H1 (cell line): ENCODE measurements at regions of chr18 and their contacts with region 1.

Region 1: DNA sequence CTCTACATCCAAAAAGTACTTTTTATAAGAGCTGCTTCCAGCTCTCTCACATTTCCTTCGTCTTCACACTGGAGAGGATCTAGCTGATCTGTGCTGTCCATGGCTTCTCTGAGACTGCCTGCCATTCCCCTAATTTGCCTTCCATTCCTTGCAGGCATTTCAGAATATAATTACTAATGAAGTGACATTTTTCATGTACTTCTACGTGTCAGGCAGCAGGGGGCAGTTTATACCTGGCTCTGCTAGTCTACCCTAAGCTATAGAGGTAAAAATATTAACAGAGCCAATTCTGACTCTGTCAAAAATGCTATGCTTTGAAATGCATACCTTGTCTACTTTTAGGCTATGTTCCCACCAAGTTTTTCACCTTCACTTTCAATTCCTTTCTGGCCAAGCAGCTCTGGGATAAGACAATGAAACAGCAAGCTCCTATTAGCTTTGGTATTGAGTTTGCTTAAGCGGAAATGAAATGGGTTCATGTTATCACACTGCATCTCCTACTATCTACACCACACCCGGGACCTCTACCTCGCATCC is 81.9 kb downstream of the MEP1B start:
- DNase-seq: no peak
- H3K4me3 ChIP-seq: no peak overlapping the region
- H3K27ac ChIP-seq: no peak overlapping the region
- H3K4me1 ChIP-seq: peaks cover 0 to 3% (median under 1%) of the 10 kb centered on the region in 4 experiments; a peak in 3 of 7 replicates
- H3K27me3 ChIP-seq: no peaks in the 10 kb centered on the region
- CTCF ChIP-seq: peak in 2 of 3 experiments; percentile 51 to 68; a peak in 2 of 4 replicates
- EP300 ChIP-seq: no peak
- POLR2A ChIP-seq: no peak
- RAD21 ChIP-seq: peak; percentile 80 to 82

Region 2: DNA sequence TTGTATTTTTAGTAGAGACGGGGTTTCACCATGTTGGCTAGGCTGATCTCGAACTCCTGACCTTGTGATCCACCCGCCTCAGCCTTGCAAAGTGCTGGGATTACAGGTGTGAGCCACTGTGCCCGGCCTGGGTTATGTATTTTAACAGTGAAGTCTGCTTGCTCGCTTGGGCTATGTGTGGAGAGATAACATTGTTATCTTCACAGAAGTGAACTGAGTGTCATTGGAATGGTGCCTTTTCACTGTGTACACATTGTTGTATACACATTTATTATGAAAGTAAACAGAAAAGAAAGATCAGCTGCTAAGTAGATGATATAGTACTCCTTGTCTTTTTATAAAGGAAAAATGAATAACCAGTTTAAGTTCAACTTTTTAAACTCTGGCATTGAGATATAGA is 149.7 kb before region 1 on chr18:
- CTCF ChIA-PET with region 1: no interaction called
- POLR2A ChIA-PET with region 1: no interaction called
- DNase-seq: no peak
- H3K4me3 ChIP-seq: no peak overlapping the region
- H3K27ac ChIP-seq: no peak overlapping the region
- H3K4me1 ChIP-seq: no peaks in the 10 kb centered on the region
- H3K27me3 ChIP-seq: no peaks in the 10 kb centered on the region
- CTCF ChIP-seq: no peak
- EP300 ChIP-seq: no peak
- POLR2A ChIP-seq: no peak
- RAD21 ChIP-seq: no peak

Region 3: DNA sequence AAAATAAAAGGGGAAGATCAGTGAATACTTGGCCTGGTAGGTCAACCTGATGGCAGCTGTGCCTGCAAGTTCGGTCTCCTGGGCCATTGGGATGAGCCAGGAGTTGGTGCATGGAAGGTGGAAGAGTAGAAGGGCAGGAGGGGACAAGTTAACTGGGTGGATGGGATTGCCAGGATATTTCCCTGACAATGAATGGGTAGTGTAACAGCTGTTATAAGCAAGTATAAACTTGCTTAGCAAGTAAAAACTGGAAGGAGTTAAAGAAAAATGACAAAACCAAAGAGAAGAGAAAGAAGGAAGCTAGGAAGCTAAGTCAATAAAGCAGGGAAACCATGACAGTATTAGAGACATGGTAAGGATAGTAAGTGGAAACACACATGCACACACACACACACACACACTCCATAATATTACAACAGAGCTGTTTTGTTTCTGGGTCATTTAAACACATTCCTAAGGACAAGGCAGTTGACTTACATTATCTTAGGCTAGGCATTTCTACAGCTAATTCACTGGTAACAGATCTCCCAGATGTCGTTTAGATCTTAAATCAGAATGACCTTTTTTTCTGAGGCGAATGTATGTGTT is 52.2 kb before region 1 on chr18:
- CTCF ChIA-PET with region 1: interaction called, 10 read pairs
- POLR2A ChIA-PET with region 1: no interaction called
- DNase-seq: no peak
- H3K4me3 ChIP-seq: no peak overlapping the region
- H3K27ac ChIP-seq: no peak overlapping the region
- H3K4me1 ChIP-seq: no peaks in the 10 kb centered on the region
- H3K27me3 ChIP-seq: no peaks in the 10 kb centered on the region
- CTCF ChIP-seq: no peak
- EP300 ChIP-seq: no peak
- POLR2A ChIP-seq: no peak
- RAD21 ChIP-seq: no peak

Region 4: GRCh38 chr18:32261003-32261402 is 10.7 kb before region 1 on chr18:
- CTCF ChIA-PET with region 1: interaction called, 49 read pairs
- POLR2A ChIA-PET with region 1: no interaction called
- DNase-seq: no peak
- H3K4me3 ChIP-seq: no peak overlapping the region
- H3K27ac ChIP-seq: no peak overlapping the region
- H3K4me1 ChIP-seq: no peaks in the 10 kb centered on the region
- H3K27me3 ChIP-seq: no peaks in the 10 kb centered on the region; a peak in 1 of 7 replicates
- CTCF ChIP-seq: peak in 1 of 3 experiments; percentile 46; a peak in 1 of 4 replicates
- EP300 ChIP-seq: no peak
- POLR2A ChIP-seq: no peak
- RAD21 ChIP-seq: peak in 1 of 2 experiments; percentile 21; a peak in 1 of 4 replicates

Region 5: GRCh38 chr18:32289483-32290075 is 17.8 kb after region 1 on chr18:
- CTCF ChIA-PET with region 1: interaction called, 56 read pairs
- POLR2A ChIA-PET with region 1: no interaction called
- DNase-seq: peak in 1 of 2 experiments; percentile 68
- H3K4me3 ChIP-seq: no peak overlapping the region
- H3K27ac ChIP-seq: no peak overlapping the region
- H3K4me1 ChIP-seq: no peaks in the 10 kb centered on the region; a peak in 1 of 7 replicates
- H3K27me3 ChIP-seq: no peaks in the 10 kb centered on the region
- CTCF ChIP-seq: peak; percentile 31 to 75 (median 72)
- EP300 ChIP-seq: no peak
- POLR2A ChIP-seq: no peak
- RAD21 ChIP-seq: peak; percentile 66 to 79